GM23248 (cell line): ENCODE measurements at regions of chr17 and their contacts with region 1.

Region 1: DNA sequence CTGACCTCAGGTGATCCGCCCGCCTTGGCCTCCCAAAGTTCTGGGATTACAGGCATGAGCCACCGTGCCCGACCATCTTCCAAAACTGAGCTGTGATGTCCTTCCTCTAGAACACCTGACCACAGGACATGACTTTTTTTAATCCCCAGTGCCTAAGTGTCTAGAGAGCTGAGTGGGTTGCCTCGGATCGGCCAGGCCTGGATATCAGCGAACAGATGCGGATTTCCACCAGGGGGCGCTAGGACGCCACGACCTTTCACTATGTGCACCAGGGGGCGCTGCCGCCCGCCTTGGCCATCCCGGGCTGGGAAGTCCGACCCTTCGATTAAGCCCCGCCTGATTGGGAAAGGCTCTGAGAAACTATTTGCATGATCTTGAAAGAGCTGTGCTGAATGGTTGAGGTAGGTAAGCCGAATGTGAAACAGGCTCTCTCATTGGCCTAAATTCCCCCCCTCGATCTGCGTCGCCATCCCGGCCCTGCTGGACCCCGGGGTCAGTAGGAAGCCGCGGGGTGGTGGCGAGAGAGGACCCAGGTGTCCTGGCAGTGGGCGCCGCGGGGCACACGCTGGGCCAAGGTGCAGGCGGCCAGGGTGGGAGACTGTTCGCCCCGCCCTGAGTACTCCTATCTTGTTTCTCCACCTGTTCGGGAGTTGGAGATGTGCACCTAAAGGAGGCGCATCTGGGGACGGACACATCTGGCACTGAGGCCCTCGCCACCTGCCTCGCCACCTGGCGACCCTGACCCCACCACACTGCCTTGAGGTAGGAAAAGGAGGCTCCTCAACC is at the start of gene ACBD4:
- DNase-seq: peak; percentile 98
- H3K4me3 ChIP-seq: peak within 1 kb of the TSS; percentile 78
- H3K27ac ChIP-seq: no peak within 1 kb of the TSS
- H3K4me1 ChIP-seq: peaks cover 11% of the 10 kb centered on the region
- H3K27me3 ChIP-seq: no peaks in the 10 kb centered on the region
- total RNA-seq, gene ACBD4: 2.1 and 2.9 TPM in 2 replicates

Region 2: DNA sequence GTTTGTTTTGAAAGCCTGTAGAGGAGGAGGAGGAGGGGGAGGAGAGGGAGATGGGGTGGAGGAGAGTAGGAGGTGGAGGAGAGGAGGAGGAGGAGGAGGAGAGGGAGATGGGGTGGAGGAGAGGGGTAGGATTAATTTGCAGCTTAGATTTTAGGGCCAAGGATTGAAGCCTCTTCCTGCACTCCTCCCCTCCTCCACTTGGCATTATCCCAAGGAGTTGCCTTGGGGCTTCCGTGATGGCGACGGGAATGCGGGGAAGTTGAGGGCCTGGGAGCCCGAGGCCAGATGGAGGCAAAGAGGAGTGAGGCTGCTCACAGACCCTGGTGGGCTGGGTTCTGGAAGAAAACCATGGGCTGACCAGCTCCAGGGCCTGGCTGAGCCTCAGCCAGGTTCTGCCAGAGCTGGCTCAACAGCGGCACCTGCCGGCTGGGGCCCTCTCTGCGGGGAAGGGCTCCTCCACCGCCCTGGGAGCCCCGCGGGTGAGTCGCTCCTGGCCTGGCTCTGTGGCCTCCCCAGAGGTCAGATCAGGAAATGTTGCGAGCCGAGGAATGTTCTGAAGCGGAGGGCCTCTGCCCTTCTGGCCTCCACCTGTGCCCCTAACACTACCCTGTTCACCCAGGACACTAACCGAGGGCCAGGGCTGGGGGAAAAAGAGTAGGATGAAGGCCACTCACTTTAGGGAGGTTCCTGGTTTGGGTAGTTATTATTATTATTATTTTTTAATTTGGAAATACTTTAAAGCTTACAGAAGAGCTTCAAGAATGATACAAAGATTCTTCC is 62.4 kb after region 1 on chr17:
- in situ Hi-C with region 1: loop called (anchors 5 kb)
- DNase-seq: peak; percentile 93
- H3K4me3 ChIP-seq: no peak overlapping the region
- H3K27ac ChIP-seq: no peak overlapping the region
- H3K4me1 ChIP-seq: peaks cover 5% of the 10 kb centered on the region; the same call in 1 of the 2 replicates
- H3K27me3 ChIP-seq: no peaks in the 10 kb centered on the region

Region 3: DNA sequence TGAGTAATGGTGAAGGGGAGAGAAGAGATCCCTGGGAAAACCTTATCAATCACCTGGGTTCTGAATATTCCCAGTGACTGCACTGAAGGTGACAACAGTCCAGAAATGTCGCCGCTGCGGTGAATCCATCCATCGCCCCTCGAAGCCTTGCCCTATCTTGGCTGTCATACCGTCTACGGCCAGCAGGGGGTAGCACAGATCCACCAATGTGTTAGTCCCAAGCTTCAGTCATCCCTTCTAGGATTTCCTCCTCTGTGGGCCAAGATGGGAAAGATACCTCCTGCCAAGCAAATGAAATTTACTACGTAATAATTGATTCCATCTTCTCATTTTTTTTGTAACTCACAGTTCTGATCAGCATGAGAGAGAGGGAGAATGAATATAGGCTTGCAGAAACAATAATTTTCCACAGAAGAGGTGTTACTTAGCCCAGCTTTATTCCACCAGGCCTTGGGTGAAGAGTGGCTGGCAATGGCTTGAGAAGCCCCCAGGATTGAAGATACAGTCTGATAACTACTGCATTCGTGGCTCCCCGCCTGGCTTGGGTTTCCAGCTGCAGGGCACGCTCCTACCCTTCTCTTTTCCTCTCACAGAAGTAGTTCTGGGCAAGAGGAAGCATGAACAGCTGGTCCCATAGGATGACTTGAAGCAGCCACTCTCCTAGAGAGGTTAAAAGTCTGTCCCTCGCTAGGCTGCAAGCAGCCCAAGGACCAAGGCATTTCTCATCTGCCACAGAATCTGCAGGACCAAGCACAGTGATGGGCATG is 83.7 kb after region 1 on chr17:
- in situ Hi-C with region 1: no loop called
- DNase-seq: peak; percentile 83
- H3K4me3 ChIP-seq: peak overlapping the region; percentile 33
- H3K27ac ChIP-seq: no peak overlapping the region
- H3K4me1 ChIP-seq: 0 out of 2 replicates have a peak, but pooled peaks cover 5% of the 10 kb centered on the region
- H3K27me3 ChIP-seq: no peaks in the 10 kb centered on the region